A549 (cell line): ENCODE measurements at regions of chr11 and their contacts with region 1.

Region 1: DNA sequence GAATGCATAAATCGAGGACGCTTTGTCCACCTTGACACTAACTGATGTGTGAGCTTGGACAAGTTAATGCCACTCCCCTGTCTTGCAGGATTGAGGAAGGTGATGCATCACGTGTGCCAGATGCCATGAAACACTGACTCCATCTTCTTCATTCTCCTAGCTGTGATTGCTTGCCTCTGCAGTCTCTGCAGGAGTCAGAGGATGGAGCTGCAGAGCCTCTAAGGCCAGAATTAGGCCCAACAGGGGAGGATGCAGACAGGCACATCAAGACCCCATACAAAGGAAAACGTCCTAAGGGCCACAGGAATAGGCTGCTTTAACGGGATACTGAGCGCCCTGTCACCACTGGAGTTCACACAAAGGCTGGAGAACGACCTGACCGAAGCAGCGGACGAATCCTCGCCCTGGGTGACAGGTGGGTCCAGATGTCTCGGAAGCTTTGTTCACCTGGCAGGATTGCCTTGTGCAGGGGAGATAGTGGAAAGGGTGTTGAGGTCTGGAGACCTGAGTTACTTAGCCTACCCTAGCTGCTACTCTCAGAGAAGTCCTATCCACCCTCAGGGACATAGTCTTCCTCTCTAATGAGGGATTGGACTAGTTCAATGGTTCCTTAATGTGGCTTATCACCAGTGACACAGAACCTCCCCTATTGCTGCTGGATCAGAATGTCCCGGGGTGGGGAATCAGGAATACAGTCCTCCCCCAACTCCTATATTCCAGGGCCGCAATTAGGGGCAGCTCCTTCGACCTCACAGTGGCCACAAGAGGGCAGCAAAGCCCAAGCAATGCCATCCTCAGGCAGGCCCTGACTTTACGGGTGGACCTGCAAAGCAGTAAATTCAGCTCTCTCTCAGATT is 32.4 kb downstream of the DBX1 start:
- DNase-seq: peak; percentile 66 to 70
- ATAC-seq: peak; percentile 87 to 93
- H3K4me3 ChIP-seq: no peak overlapping the region
- H3K27ac ChIP-seq: peak overlapping the region; percentile 59 to 61; a peak in 5 of 6 replicates
- H3K4me1 ChIP-seq: peaks cover 16% of the 10 kb centered on the region; the same call in 2 of the 3 replicates
- CTCF ChIP-seq: peak; percentile 83
- EP300 ChIP-seq: no peak
- POLR2A ChIP-seq: no peak
- RAD21 ChIP-seq: peak; percentile 86 to 94

Region 2: GRCh38 chr11:19723572-19724342 is 404.1 kb before region 1 on chr11:
- CTCF ChIA-PET with region 1: no interaction called
- POLR2A ChIA-PET with region 1: no interaction called
- DNase-seq: no peak
- ATAC-seq: no peak; a peak in 1 of 6 replicates
- H3K4me3 ChIP-seq: no peak overlapping the region
- H3K27ac ChIP-seq: peak overlapping the region; percentile 25 to 59; a peak in 3 of 6 replicates
- H3K4me1 ChIP-seq: peaks cover 18% of the 10 kb centered on the region
- CTCF ChIP-seq: no peak
- EP300 ChIP-seq: no peak
- POLR2A ChIP-seq: no peak
- RAD21 ChIP-seq: no peak

Region 3: DNA sequence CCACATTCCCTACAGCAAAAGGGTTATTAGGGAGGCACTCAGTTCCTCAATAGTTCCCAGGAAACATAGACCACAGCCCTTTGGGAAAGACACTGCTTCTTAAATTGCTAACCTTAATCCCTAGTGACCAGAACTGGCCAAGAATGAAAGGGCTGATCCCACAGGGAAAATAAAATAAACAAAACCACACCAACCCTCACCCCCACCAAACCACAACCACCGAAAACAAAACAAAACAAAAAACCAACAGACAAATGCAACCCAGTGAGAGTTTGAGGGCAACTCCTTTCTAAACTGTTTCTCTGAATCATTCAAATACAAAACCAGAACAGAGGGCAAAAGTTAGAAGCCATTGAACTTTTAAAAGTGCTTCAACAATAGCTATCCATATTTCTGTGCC is 358.1 kb before region 1 on chr11:
- CTCF ChIA-PET with region 1: no interaction called
- POLR2A ChIA-PET with region 1: no interaction called
- DNase-seq: no peak
- ATAC-seq: no peak
- H3K4me3 ChIP-seq: no peak overlapping the region
- H3K27ac ChIP-seq: no peak overlapping the region
- H3K4me1 ChIP-seq: no peaks in the 10 kb centered on the region
- CTCF ChIP-seq: no peak
- EP300 ChIP-seq: no peak
- POLR2A ChIP-seq: no peak
- RAD21 ChIP-seq: no peak

Region 4: DNA sequence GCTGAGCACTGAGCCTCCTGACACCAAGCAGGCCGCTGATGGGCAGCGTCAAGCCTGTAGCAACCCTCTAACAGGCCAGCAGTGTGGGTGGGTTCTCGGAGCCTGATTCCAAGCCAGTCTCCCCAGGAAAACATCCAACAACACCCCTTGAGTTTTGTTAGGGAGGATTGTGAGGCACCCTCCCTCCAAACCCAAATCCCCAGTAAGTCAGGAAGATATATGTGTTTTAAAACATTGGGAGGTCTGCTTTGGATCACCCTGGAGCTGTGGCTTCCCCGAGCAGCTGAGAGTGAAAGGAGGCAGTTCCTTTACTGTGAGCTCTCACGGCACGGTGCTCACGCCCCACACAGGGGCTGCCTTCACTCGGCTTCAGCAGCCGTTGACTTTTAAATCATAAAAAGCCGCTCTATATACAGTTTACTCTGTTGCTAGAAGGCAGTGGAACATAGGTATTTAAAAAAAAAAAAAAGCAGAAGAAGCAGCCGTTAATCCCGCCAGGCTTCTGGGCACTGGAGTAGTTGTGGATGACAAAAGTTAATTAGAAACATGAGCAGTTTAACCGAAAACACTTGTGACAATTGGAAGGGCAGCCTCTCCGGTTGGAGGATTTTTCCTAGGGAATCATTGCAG is 196.6 kb before region 1 on chr11:
- CTCF ChIA-PET with region 1: interaction called, 84 read pairs
- POLR2A ChIA-PET with region 1: no interaction called
- DNase-seq: no peak
- ATAC-seq: no peak
- H3K4me3 ChIP-seq: no peak overlapping the region
- H3K27ac ChIP-seq: no peak overlapping the region
- H3K4me1 ChIP-seq: peaks cover 12% of the 10 kb centered on the region; the same call in 2 of the 3 replicates
- CTCF ChIP-seq: no peak
- EP300 ChIP-seq: no peak
- POLR2A ChIP-seq: no peak
- RAD21 ChIP-seq: no peak

Region 5: DNA sequence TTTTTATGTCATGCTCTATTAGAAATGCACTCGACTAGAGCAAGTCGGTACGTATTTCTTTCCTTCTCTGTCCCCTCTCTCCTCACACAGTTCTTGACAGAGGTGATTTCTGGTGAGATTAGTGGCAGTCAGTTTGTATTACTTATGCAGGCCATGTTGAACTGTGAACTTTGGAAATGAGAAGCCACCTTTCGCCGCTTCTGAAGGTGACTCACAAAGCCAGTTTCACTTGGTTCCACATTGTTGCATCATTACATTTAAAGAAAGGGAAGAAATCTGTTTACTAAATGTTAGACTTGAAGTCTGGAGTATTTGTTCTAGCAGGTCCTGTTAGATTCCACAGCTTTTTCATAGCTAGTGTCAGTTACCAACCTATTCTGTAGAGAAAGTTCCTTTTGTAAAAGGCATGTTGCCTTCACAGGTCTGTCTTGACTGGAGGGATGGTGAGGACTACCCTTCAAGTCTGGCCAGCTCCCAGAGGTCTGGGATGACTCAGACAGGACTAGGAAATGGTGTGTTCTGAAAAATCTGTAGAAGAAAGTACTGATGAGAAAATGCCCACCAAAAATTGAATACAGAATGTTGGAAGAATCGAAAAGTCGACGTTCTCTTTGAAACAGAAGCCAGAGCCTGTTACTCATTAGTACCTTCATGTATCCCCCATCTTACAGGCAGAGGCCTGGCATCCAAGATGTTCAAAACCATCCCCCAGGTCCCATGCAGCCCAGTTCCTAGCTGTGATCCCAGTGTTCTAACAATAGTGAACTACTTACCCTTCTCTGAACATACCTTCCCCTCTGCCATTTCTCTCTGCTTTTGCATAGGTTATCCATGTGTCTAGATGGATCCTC is 149.0 kb before region 1 on chr11:
- CTCF ChIA-PET with region 1: interaction called, 20 read pairs
- POLR2A ChIA-PET with region 1: no interaction called
- DNase-seq: peak; percentile 57 to 79
- ATAC-seq: peak; percentile 90 to 94
- H3K4me3 ChIP-seq: no peak overlapping the region; the same call in 2 of the 3 replicates
- H3K27ac ChIP-seq: peak overlapping the region; percentile 91 to 99
- H3K4me1 ChIP-seq: peaks cover 69% of the 10 kb centered on the region
- CTCF ChIP-seq: no peak
- EP300 ChIP-seq: peak; percentile 50 to 81; a peak in 3 of 5 replicates
- POLR2A ChIP-seq: no peak
- RAD21 ChIP-seq: peak in 1 of 2 experiments; percentile 25; a peak in 1 of 5 replicates

Region 6: DNA sequence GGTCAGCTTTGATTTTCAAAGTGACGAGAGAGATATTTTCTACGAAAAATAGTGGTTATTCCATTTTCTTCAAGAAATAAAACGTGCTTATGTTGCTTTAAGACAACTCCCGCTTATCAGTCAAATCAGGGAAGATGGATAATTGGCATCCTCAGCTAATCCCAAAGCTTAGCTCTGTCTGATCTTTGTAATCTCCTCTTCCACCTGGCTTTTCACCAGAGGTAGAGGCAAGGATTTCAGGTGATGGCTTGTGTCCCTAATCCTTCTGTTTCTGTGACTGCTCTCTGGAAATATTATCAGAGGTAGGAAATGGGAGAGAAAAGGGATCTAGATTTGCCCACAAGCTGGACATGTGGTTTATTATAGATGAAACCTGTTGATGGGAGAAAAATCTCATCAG is 46.6 kb before region 1 on chr11:
- CTCF ChIA-PET with region 1: interaction called, 11 read pairs
- POLR2A ChIA-PET with region 1: no interaction called
- DNase-seq: no peak
- ATAC-seq: no peak
- H3K4me3 ChIP-seq: no peak overlapping the region
- H3K27ac ChIP-seq: no peak overlapping the region
- H3K4me1 ChIP-seq: no peaks in the 10 kb centered on the region
- CTCF ChIP-seq: no peak
- EP300 ChIP-seq: no peak
- POLR2A ChIP-seq: no peak
- RAD21 ChIP-seq: no peak

Region 7: GRCh38 chr11:20154381-20154780 is 26.5 kb after region 1 on chr11:
- CTCF ChIA-PET with region 1: interaction called, 10 read pairs
- POLR2A ChIA-PET with region 1: no interaction called
- DNase-seq: no peak
- ATAC-seq: 0 out of 6 replicates have a peak, but pooled peaks of 1 of the 2 experiments have one; percentile 30
- H3K4me3 ChIP-seq: no peak overlapping the region
- H3K27ac ChIP-seq: no peak overlapping the region
- H3K4me1 ChIP-seq: peaks cover 5% of the 10 kb centered on the region; the same call in 2 of the 3 replicates
- CTCF ChIP-seq: no peak
- EP300 ChIP-seq: no peak
- POLR2A ChIP-seq: no peak
- RAD21 ChIP-seq: no peak

Region 8: DNA sequence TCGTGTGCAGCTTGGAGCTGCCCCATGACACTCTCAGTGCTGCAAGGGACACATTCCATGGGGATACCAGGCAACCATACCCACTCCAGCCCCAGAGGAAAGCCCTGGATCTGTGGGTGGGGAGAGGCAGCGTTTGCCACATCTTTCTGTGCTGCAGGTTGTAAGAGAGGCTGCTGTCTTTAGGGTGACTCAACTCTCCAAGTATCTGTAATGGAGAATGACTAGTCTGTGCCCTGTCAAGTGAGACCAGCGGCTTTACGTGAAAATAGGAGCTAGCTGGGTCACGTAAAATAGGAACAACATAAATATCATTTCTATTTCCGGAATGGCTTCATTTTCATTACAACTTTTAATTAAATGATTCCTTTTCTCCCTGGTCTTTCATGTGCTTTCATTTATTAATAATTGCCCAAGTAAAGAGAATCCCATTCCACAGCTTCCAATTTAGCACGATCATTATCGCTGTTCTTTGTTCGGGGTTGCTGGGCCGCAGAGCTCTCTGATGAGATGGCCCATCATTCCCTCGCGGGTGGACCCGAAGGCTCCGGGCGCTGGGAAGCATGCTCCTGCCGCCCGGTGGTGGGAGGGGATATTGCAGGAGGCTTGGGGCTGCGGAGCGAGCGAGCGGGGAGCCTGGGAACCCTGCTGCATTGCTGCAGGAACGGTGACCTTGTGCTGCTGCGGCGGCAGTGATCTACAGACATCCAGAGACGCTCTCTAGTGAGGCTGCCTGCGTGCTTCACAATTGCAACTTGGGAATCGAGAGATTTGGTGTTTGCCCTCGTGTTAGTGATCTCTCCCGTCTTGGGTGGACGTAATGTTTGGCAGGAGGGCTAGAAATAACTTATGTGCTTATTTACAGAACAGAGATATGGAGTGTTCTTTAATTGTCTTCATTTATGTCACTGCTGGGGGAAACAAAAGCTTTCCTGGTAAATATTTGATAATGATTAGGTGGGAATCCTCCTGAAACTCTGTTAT is 482.1 kb after region 1 on chr11:
- CTCF ChIA-PET with region 1: interaction called, 12 read pairs
- POLR2A ChIA-PET with region 1: no interaction called
- DNase-seq: peak; percentile 68 to 71
- ATAC-seq: peak; percentile 96 to 99
- H3K4me3 ChIP-seq: peak overlapping the region; percentile 26; the same call in 1 of the 3 replicates
- H3K27ac ChIP-seq: no peak overlapping the region
- H3K4me1 ChIP-seq: 0 out of 3 replicates have a peak, but pooled peaks cover 4% of the 10 kb centered on the region
- CTCF ChIP-seq: peak; percentile 83
- EP300 ChIP-seq: no peak
- POLR2A ChIP-seq: no peak
- RAD21 ChIP-seq: peak; percentile 90 to 91

Region 9: DNA sequence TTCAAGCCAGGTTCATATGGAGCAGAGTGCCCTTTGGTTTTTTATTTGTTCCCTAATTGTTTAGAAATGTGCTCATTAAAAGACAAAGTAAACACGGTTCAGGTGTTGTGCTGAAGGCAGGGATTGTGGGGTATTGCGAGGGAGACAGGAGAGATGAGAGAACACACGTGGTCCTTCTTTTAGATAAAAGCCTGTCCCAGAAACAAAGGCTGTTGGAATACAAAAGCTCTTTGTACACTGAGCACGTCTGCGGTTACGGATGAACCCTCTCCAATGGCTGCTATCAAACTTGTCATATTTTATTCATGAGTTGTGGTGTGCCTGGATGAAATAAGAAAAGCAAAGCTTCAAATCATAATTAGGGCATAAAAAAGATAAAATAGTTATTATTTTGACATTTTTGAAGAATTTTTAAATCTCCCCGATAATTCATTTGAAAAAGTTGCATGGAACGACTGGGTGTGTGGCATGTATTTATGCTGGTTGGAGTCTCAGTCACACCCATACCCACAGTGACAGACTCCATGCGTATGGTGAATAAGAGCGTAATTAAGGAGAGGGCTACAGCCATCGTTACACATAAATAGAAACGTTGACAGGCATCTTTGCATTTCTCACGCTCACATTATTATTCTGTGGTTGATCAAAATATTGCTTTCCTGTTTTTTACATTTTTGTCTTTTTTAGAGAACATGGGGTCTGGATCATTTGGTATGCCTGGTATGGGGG is 634.4 kb after region 1 on chr11:
- CTCF ChIA-PET with region 1: no interaction called
- POLR2A ChIA-PET with region 1: no interaction called
- DNase-seq: no peak
- ATAC-seq: no peak
- H3K4me3 ChIP-seq: no peak overlapping the region
- H3K27ac ChIP-seq: no peak overlapping the region
- H3K4me1 ChIP-seq: no peaks in the 10 kb centered on the region
- CTCF ChIP-seq: no peak
- EP300 ChIP-seq: no peak
- POLR2A ChIP-seq: no peak
- RAD21 ChIP-seq: no peak